Posterior vena cava (tissue), 2 donors: ENCODE measurements at regions of chr4 and their contacts with region 1.

Region 1: DNA sequence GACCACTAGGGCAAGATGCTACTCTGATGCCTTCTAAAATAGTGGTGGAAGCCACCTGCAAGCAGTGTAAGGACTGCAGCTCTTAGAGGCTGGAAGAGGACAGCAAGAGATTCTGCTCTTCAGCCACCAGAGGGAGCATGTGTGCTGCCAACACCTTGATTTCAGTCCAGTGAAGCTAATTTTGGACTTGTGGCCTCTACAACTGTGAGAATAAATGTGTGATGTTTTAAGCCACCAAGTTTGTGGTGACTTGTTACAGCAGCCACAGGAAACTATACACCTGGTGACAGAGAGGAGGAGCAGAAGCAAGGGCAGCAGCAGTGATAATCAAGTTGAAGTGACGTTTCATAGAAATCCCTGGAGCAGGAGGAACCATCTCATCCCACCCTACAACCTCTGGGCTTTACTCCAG is 55.9 kb downstream of the FGFBP1 start:
- DNase-seq: no peak

Region 2: GRCh38 chr4:15542795-15543194 is 339.9 kb before region 1 on chr4:
- intact Hi-C with region 1: no loop called
- DNase-seq: no peak

Region 3: DNA sequence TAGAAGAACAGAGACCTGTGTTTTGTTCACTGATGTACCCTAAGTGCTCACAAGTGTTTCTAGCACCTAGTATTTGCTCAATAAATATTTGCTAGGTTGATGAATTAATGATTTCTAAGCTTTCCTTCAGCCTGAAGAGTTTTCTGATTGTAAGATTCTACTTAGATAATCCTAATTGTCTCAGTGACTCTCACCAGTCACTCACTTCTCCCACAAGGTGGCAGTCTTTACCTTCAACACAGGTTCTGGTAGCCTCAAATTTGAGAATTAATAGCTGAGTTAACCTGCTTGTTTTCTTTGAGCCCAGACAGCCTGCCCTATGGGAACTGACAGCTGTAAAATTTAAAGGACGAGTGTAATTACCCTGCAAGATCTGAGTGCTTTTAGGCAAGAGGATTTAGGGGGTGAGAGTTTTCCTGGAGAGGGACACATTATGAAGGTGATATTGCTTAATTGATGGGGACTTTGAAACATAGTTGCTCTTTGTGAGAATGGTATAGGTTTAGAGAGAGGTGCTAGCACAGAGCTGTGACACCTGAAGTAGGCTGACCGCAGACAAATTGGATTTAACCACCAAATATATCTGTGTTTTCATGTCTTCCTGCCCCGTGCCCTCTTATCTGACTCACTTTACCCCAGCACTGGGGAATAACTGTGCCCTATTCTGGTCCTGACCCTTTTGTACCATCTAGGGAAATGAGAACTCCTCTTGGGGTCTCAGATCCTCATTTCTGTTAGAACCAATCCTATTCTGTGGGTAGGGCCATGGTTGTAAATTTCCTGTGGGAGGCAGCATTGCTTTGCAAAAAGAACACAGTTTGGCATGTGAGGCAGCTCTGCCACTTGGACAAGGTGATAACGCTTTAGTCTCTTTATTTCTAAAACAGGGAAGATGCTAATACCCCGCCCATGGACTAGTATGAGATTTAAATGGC is 76.8 kb before region 1 on chr4:
- intact Hi-C with region 1: loop called in 1 of 2 experiments (anchors 10 kb)
- DNase-seq: no peak

Region 4: GRCh38 chr4:15956179-15956850 is 73.6 kb after region 1 on chr4:
- intact Hi-C with region 1: loop called (anchors 2 to 10 kb)
- DNase-seq: peak; percentile 89

Region 5: DNA sequence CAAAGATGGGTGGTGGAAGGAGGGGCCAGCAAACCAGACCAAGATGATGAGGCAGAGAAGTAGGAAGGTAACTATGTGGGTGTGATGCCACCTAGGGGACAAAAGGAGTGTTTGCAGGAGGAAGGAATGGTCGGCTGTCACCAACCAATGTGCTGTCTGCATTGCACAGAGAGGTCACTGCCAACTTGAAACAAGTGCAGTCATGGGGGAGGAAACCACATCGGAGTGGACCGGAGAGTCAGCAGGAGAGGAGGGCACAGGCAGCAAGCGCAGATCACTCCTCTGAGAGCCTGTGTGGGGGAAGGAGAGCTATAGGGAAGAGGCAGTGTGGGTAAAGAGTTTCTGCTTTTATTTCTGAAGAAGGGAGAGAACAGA is 118.8 kb after region 1 on chr4:
- intact Hi-C with region 1: loop called in 1 of 2 experiments (anchors 5 kb)
- DNase-seq: no peak